ENCODE measurements at regions of chr4 and their contacts with region 1.

Region 1: GRCh38 chr4:89110986-89111832 is at the start of gene TIGD2:
- DNase-seq: peak; percentile 82
- H3K4me3 ChIP-seq: peak within 1 kb of the TSS; percentile 70 to 84 (median 76)
- H3K27ac ChIP-seq: peak within 1 kb of the TSS; percentile 77
- H3K4me1 ChIP-seq: peaks cover 18% of the 10 kb centered on the region
- H3K27me3 ChIP-seq: peaks cover 8% of the 10 kb centered on the region
- CTCF ChIP-seq: peak; percentile 53 to 72
- total RNA-seq, gene TIGD2: 14.7 to 14.8 TPM

Region 2: DNA sequence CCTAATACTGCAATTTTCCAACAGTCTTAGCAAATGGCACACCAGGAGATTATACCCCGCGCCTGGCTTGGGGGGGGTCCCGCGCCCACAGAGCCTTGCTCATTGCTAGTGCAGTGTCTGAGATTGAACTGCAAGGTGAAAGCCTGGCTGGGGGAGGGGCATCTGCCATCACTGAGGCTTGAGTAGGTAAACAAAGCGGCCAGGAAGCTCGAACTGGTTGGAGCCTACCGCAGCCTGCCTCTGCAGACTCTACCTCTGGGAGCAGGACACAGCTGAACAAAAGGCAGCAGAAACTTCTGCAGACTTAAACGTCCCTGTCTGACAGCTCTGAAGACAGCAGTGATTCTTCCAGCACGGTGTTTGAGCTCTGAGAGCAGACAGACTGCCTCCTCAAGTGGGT is 240.8 kb before region 1 on chr4:
- CTCF ChIA-PET with region 1: no interaction called
- dilution Hi-C with region 1: no loop called
- in situ Hi-C with region 1: no loop called
- intact Hi-C with region 1: no loop called
- DNase-seq: no peak
- H3K4me3 ChIP-seq: no peak overlapping the region
- H3K27ac ChIP-seq: no peak overlapping the region
- H3K4me1 ChIP-seq: peaks cover 14% of the 10 kb centered on the region
- H3K27me3 ChIP-seq: no peaks in the 10 kb centered on the region
- CTCF ChIP-seq: no peak

Region 3: GRCh38 chr4:88938135-88938534 is 173.1 kb before region 1 on chr4:
- CTCF ChIA-PET with region 1: no interaction called
- dilution Hi-C with region 1: no loop called
- in situ Hi-C with region 1: no loop called
- intact Hi-C with region 1: loop called (anchors 5 kb)
- DNase-seq: peak; percentile 93
- H3K4me3 ChIP-seq: no peak overlapping the region
- H3K27ac ChIP-seq: peak overlapping the region; percentile 37
- H3K4me1 ChIP-seq: peaks cover 6% of the 10 kb centered on the region
- H3K27me3 ChIP-seq: no peaks in the 10 kb centered on the region
- CTCF ChIP-seq: peak in 1 of 2 donors; percentile 36

Region 4: GRCh38 chr4:89024051-89024675 is 87.0 kb before region 1 on chr4:
- CTCF ChIA-PET with region 1: no interaction called
- dilution Hi-C with region 1: no loop called
- in situ Hi-C with region 1: no loop called
- intact Hi-C with region 1: loop called (anchors 1 kb)
- DNase-seq: peak; percentile 60
- H3K4me3 ChIP-seq: no peak overlapping the region
- H3K27ac ChIP-seq: no peak overlapping the region
- H3K4me1 ChIP-seq: no peaks in the 10 kb centered on the region
- H3K27me3 ChIP-seq: no peaks in the 10 kb centered on the region
- CTCF ChIP-seq: peak; percentile 74

Region 5: DNA sequence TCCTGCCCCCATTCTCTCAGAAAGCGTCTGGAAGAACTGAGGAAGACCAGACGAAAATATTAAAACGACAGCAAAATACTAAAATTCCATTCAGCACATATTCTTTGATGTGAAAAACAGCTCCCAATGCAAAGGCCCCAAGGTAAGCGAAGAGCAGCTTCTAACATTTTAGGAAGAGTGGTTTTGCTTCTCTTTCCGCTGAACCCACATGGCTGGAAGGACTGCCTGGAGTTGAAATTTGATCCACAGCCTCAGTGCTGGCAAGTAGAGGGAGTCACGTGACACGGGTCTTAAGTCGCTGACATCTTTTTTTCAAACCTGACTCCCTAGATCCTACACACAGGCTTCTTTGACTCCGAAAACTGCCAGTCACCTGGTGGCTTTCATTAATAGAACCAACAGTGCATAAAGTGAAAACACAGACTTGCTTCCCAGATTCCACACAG is 54.2 kb before region 1 on chr4 and contains the start of gene FAM13A:
- CTCF ChIA-PET with region 1: no interaction called
- dilution Hi-C with region 1: no loop called
- in situ Hi-C with region 1: no loop called
- intact Hi-C with region 1: loop called (anchors 1 kb)
- DNase-seq: peak; percentile 90
- H3K4me3 ChIP-seq: peak within 1 kb of the TSS; percentile 40 to 65 (median 44)
- H3K27ac ChIP-seq: peak within 1 kb of the TSS; percentile 67
- H3K4me1 ChIP-seq: peaks cover 7% of the 10 kb centered on the region
- H3K27me3 ChIP-seq: no peaks in the 10 kb centered on the region
- CTCF ChIP-seq: no peak
- total RNA-seq, gene FAM13A: 7.8 to 12.8 TPM

Region 6: DNA sequence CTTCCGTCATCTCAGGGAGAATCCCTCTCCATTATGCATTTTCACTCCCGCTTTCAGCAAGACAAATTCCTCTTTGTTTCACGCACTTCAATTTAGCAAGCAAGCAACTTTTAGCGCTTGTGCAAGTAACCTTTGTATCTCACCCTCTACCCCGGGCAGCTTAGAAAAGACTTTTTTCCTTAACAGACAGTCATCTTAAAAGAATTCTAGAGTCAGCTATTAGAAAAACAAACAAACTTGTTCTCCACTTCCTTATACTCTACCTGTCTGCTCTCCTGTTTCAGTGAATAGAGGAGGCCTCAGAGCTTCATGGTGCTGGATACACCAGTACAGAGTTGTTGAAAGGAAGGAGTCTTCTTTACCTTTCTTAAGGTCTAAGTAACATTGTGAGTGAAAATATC is 12.2 kb after region 1 on chr4:
- CTCF ChIA-PET with region 1: no interaction called
- dilution Hi-C with region 1: no loop called
- in situ Hi-C with region 1: no loop called
- intact Hi-C with region 1: loop called (anchors 1 kb)
- DNase-seq: peak; percentile 63
- H3K4me3 ChIP-seq: no peak overlapping the region
- H3K27ac ChIP-seq: no peak overlapping the region
- H3K4me1 ChIP-seq: peaks cover 13% of the 10 kb centered on the region
- H3K27me3 ChIP-seq: no peaks in the 10 kb centered on the region
- CTCF ChIP-seq: no peak

Region 7: DNA sequence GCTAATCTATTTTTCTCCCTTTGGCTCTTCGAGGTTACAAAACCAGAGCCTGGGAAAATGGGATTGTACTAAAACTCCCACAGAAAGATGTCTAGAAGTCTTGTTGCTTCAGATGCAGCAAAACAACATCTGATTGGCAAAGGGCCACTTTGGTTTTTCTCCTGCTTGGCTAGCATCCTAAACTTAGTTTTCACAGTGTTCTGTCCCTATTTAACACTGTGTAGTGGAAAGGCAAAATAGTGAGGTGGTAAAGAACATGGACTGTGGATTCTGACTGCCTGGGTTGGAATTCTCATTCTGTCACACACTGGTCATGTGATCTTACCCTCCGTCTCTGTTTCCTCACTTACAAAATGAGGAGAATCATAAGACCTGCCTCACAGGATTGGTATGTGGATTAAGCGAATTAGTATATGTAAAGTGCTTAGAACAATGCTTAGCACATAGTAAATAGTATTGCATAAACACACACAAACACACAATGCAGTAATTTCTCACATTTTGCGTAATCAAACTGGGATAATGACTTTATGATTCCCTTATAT is 23.6 kb after region 1 on chr4:
- CTCF ChIA-PET with region 1: no interaction called
- dilution Hi-C with region 1: no loop called
- in situ Hi-C with region 1: no loop called
- intact Hi-C with region 1: loop called (anchors 2 kb)
- DNase-seq: peak; percentile 71
- H3K4me3 ChIP-seq: no peak overlapping the region
- H3K27ac ChIP-seq: no peak overlapping the region
- H3K4me1 ChIP-seq: peaks cover 5% of the 10 kb centered on the region
- H3K27me3 ChIP-seq: no peaks in the 10 kb centered on the region
- CTCF ChIP-seq: no peak

Region 8: DNA sequence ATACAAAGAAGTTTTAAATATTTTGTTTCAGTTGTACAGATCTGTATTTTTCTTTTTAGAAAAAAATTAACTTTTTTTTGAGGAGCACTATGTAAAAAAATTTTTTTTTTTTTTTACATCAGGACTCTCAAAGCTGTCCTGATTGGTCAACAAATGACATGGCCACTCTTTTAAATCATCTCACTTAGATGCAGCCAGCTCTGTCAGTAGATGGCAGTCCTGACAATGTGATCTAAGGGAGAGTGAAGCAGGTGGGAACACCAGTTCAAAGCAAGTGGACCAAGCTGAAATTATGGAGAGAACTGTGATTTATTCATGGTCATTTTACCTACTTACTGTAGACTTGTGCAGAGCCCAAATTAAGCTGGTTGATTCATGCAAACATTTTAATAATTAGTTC is 371.0 kb after region 1 on chr4:
- CTCF ChIA-PET with region 1: no interaction called
- dilution Hi-C with region 1: no loop called
- in situ Hi-C with region 1: no loop called
- intact Hi-C with region 1: no loop called
- DNase-seq: peak; percentile 39
- H3K4me3 ChIP-seq: no peak overlapping the region
- H3K27ac ChIP-seq: no peak overlapping the region
- H3K4me1 ChIP-seq: no peaks in the 10 kb centered on the region
- H3K27me3 ChIP-seq: no peaks in the 10 kb centered on the region
- CTCF ChIP-seq: peak; percentile 34 to 49

Measured in mammary epithelial cell (primary cell).